ENCODE measurements at regions of chr1 and their contacts with region 1.

Region 1: DNA sequence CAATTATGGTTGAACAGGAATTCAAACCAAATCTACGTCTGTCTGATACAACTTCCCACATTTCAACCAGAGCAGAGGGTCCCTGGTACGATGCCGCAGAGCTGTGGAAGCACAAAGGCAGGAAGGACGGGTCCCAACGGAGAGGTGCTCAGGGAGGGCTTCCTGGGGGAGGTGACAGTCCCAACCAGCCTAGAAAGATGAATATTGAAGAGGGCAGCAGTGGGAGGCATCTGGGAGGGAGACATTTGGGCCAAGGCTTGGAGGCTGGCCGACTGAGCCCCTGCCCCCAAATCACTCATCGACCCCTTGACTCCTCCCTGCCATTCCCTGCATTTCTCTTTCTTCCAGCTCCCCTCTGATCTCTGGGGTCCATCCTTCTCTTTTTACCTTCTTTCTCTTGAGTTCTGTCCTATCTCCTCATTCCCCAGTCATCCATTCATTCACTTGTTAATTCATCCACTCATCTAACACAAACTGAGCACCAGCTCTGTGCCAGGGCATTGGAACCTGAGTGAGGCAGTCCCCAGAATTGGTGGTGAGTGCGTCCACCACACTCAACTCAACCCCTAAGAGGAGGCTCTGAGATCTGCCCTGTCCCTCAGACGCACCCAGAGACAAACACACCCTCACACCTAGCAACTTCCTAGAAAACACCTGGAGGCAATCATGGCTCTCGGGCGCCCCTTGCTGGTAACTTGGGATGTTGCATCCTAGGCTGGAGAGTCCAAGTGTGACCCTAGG is 13.2 kb upstream of the CELA3B start:
- DNase-seq: peak; percentile 70
- H3K4me3 Mint-ChIP-seq: no peak overlapping the region
- H3K27ac Mint-ChIP-seq: peak overlapping the region; percentile 1
- H3K4me1 Mint-ChIP-seq: peaks cover 5% of the 10 kb centered on the region
- H3K27me3 Mint-ChIP-seq: peaks cover 3% of the 10 kb centered on the region

Region 2: GRCh38 chr1:21508580-21509350 is 454.9 kb before region 1 on chr1:
- intact Hi-C with region 1: loop called (anchors 2 kb)
- DNase-seq: peak; percentile 51
- H3K4me3 Mint-ChIP-seq: peak overlapping the region; percentile 60
- H3K27ac Mint-ChIP-seq: peak overlapping the region; percentile 5
- H3K4me1 Mint-ChIP-seq: peaks cover 6% of the 10 kb centered on the region
- H3K27me3 Mint-ChIP-seq: peaks cover 45% of the 10 kb centered on the region

Region 3: GRCh38 chr1:21703318-21703963 is 260.2 kb before region 1 on chr1:
- intact Hi-C with region 1: loop called (anchors 1 kb)
- DNase-seq: no peak
- H3K4me3 Mint-ChIP-seq: no peak overlapping the region
- H3K27ac Mint-ChIP-seq: no peak overlapping the region
- H3K4me1 Mint-ChIP-seq: peaks cover 17% of the 10 kb centered on the region
- H3K27me3 Mint-ChIP-seq: no peaks in the 10 kb centered on the region

Region 4: GRCh38 chr1:21814241-21814918 is 149.3 kb before region 1 on chr1:
- intact Hi-C with region 1: loop called (anchors 10 kb)
- DNase-seq: no peak
- H3K4me3 Mint-ChIP-seq: peak overlapping the region; percentile 30
- H3K27ac Mint-ChIP-seq: no peak overlapping the region
- H3K4me1 Mint-ChIP-seq: peaks cover 11% of the 10 kb centered on the region
- H3K27me3 Mint-ChIP-seq: peaks cover 21% of the 10 kb centered on the region

Region 5: DNA sequence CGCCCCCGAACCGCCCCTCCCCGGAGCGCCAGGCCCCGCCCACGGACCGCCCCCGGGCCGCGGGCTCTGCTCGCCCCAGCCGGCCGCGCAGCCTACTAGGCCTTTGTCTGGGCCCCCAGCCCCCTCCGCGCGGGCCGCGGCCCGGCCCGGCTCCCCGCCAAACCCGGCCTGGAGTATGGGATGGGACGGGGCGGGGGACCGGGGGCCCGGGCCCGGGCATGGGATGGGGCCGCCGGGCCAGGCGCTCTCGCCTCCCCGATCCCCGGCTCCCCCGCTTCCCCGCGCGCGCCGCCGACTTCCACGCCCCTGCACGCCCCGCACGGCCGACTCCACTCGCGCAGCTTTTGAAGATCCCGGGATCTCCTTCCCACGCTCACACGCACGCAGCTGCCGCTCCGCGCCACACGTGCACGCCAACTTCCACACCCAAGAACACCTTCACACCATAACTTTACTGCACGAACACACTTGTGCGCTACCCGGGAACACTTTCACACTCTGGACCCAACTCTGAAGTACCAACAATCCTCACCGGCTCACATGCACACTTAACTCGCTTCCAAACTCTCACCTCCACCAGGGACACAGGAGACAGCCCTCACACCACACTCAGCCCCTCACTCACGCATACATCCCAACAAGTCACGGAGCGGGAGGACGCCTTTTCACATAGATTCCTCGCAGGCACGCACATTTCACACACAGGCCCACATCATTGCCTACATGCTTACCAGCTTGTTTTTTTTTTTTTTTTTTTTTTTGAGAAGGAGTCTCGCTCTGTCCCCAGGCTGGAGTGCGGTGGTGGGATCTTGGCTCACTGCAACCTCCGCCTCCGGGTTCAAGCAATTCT is 26.1 kb before region 1 on chr1:
- intact Hi-C with region 1: loop called (anchors 2 kb)
- DNase-seq: peak; percentile 54
- H3K4me3 Mint-ChIP-seq: peak overlapping the region; percentile 77
- H3K27ac Mint-ChIP-seq: peak overlapping the region; percentile 70
- H3K4me1 Mint-ChIP-seq: peaks cover 11% of the 10 kb centered on the region
- H3K27me3 Mint-ChIP-seq: peaks cover 27% of the 10 kb centered on the region

Region 6: DNA sequence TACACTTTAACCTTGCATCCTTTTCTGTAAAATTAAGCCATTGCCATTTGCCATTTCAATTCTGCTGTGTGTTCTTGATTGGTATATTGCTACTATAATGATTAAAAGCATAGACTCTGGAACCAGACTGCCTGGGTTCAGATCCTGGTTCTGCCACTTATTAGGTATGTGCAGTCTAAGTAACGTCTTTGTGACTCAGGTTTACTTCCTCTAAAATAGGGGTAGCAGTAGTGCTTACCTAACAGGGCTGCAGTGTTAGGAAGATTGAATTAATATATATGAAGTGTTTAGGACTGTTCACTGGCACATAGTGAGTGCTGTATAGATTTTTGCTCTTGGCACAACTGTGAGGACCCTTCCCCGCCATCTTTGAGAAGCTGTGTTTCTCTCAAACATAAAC is 93.3 kb after region 1 on chr1:
- intact Hi-C with region 1: no loop called
- DNase-seq: no peak
- H3K4me3 Mint-ChIP-seq: peak overlapping the region; percentile 6
- H3K27ac Mint-ChIP-seq: peak overlapping the region; percentile 27
- H3K4me1 Mint-ChIP-seq: peaks cover 57% of the 10 kb centered on the region
- H3K27me3 Mint-ChIP-seq: no peaks in the 10 kb centered on the region